ENCODE measurements at regions of chr20 and their contacts with region 1.

Region 1: DNA sequence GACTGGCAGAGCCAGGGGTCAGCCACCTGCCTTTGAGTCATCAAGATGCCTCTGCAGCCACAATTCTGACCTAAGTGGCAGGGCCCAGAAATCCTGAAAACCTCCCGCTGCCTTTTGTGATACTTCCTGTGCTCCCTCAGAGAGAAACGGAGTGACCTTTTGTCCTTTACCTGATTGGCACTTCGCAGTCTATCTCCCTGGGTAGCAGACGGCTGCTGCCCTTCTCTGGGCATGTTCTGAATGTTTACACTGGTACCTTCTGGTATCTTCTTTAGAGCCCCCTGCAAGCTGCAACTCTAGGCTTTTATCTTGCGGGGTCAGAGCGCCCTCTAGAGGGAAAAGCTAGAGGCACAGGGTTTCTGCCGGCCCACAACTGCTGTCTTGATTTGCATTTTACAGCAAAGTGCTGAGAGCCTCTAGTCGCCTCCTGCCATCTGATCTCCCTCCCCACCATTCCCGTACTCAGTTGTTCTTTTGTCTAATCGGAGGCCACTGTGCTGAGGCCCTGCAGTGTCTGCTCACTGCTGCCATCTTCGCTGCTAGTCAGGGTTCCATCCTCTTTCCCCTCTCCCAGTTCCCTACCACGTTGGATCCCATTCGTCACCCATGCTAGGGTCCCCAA is 26.9 kb downstream of the SPATA2 start:
- H3K4me3 ChIP-seq: no peak overlapping the region
- H3K27ac ChIP-seq: no peak overlapping the region
- H3K4me1 ChIP-seq: no peaks in the 10 kb centered on the region
- CTCF ChIP-seq: peak; percentile 85

Region 2: DNA sequence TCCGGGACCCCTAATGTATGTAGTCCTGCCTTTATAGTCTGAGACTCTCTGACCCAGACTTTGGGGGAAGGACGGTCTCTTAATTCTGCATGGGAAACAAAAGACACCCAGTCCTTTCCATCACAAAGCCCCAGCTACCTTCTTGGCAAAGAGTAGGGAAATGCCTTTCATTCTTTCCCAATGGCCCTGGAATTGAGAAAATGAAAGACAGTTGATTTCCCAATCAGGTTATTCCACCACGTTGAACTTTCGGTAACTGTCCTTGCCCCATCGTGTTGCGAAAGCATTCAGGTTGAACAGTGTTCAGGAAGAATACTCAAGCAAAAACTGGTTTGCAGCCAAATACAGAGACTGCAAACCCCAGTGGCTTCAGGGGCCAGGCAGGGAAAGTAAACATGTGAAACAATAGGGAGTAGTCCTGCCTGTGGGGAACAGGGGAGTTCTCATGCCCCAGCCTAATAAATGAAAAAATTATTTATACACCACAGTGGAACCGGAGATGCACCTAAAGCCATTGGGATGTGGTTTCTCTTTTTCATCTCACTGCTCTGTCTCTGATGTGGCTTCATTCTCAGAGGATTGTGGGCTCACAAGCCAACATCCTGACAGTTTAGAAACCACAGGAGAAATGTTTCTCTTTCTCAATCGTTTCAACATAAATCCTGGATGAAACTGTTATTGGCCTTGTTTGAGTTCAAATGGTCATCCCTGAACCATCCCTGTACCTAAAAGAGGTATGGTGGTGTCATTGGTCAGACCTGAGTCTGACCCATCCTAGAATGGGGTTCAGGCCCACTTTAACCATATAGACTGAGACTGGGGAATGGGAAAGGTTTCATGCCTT is 120.0 kb before region 1 on chr20:
- CTCF ChIA-PET with region 1: no interaction called
- POLR2A ChIA-PET with region 1: no interaction called
- H3K4me3 ChIP-seq: no peak overlapping the region
- H3K27ac ChIP-seq: no peak overlapping the region
- H3K4me1 ChIP-seq: no peaks in the 10 kb centered on the region
- CTCF ChIP-seq: no peak

Region 3: GRCh38 chr20:49901588-49901987 is 13.1 kb after region 1 on chr20:
- CTCF ChIA-PET with region 1: interaction called, 22 read pairs
- POLR2A ChIA-PET with region 1: interaction called, 3 read pairs
- H3K4me3 ChIP-seq: no peak overlapping the region
- H3K27ac ChIP-seq: no peak overlapping the region
- H3K4me1 ChIP-seq: peaks cover 3% of the 10 kb centered on the region
- CTCF ChIP-seq: no peak

Measured in HEK293 (cell line).